ENCODE measurements at regions of chr15 and their contacts with region 1.

Region 1: GRCh38 chr15:63157118-63157843 is at the start of gene RPS27L:
- DNase-seq: peak; percentile 91 to 97 (median 96)
- ATAC-seq: peak; percentile 98
- H3K4me3 ChIP-seq: peak within 1 kb of the TSS; percentile 45
- H3K27ac ChIP-seq: peak within 1 kb of the TSS; percentile 61
- H3K4me1 ChIP-seq: no peaks in the 10 kb centered on the region
- H3K27me3 ChIP-seq: no peaks in the 10 kb centered on the region
- total RNA-seq, gene RPS27L: 142 to 188 (median 159) TPM

Region 2: DNA sequence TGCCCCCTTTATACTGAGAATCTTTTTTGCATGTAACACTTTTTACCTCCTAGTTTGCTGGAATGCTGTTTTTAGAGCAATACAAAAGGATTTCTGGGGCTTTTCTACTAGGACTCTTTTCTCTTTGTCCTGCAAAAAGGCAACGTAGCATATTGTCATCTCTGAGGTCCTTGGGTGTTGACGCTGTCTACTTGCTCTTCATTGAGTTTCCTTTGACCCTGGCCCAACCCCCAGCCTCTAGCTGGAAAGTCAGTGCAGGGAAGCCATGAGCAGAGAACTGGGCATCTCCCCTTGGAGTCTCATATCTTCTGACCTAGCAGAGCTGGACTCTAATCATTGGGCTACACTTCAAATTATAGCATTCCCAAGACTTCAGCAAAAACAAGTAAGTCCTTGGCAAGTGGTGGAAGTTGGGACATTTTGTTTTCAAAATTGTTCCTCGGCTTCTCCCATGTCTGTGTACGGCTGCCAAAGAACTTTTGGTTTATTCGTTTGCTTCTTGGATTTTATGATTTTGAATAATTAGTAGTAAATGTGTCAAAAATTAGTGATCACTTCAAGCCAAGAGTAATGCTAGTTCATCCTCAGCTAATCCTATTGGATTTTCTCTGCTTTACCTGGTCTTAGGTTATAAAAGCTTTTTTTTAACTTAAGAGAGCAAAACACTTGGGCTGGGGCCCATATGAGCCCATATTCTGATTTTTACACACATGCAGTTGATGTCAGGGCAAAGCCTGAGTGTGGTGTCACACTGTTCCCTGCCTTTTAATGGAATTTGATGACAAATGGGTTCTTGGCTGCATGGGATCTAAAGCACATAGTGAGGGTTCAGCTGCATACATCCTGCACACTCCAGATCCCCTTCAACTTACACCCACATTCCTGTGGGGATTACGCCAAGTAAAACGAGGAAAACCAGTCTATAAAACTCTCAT is 572.7 kb before region 1 on chr15:
- intact Hi-C with region 1: no loop called
- DNase-seq: peak in 1 of 3 donors; percentile 70
- ATAC-seq: peak; percentile 69 to 92
- H3K4me3 ChIP-seq: no peak overlapping the region
- H3K27ac ChIP-seq: peak overlapping the region; percentile 81
- H3K4me1 ChIP-seq: peaks cover 4% of the 10 kb centered on the region
- H3K27me3 ChIP-seq: no peaks in the 10 kb centered on the region

Region 3: DNA sequence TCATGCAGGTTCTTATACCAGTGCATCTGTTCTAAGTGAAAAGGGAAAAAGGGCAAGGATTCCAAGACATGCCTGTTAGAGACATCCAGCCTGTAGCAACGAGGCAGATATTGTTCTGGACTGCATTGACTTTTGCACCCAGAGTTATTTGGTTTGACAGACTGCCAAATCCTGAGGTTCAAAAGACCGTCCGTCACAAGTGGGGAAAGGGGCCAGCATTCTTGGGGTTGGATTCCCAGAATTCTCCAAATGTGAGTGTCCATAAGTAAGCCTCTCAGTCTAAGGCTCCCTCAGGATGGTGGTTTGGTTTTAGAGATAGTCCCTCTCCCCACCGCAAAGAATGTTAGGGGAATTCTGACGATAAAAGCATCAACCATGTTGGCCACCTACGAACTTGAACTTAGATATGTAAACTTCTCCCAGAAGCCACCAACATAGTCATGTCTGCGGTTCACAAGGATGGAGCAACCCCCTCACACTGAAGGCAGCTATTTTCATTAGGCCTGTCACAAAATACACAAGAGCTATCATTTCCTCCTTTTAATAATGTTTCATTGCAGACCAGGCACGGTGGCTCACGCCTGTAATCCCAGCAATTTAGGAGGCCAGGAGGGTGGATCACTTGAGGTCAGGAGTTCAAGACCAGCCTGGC is 49.3 kb before region 1 on chr15:
- intact Hi-C with region 1: no loop called
- DNase-seq: peak in 1 of 3 donors; percentile 30
- ATAC-seq: peak; percentile 31 to 40
- H3K4me3 ChIP-seq: no peak overlapping the region
- H3K27ac ChIP-seq: no peak overlapping the region
- H3K4me1 ChIP-seq: no peaks in the 10 kb centered on the region
- H3K27me3 ChIP-seq: no peaks in the 10 kb centered on the region

Region 4: GRCh38 chr15:63246691-63247464 is 89.6 kb after region 1 on chr15:
- intact Hi-C with region 1: loop called in 1 of 4 experiments (anchors 10 kb)
- DNase-seq: no peak
- ATAC-seq: peak; percentile 61 to 67
- H3K4me3 ChIP-seq: no peak overlapping the region
- H3K27ac ChIP-seq: peak overlapping the region; percentile 65
- H3K4me1 ChIP-seq: peaks cover 4% of the 10 kb centered on the region
- H3K27me3 ChIP-seq: no peaks in the 10 kb centered on the region

Region 5: GRCh38 chr15:63277038-63277892 is 120.0 kb after region 1 on chr15 and contains the start of gene APH1B:
- intact Hi-C with region 1: loop called in 1 of 4 experiments (anchors 10 kb)
- DNase-seq: peak; percentile 88 to 95 (median 95)
- ATAC-seq: peak; percentile 97
- H3K4me3 ChIP-seq: peak within 1 kb of the TSS; percentile 88
- H3K27ac ChIP-seq: peak within 1 kb of the TSS; percentile 93
- H3K4me1 ChIP-seq: peaks cover 4% of the 10 kb centered on the region
- H3K27me3 ChIP-seq: no peaks in the 10 kb centered on the region
- total RNA-seq, gene APH1B: 10.4 to 13.4 (median 10.9) TPM

Region 6: DNA sequence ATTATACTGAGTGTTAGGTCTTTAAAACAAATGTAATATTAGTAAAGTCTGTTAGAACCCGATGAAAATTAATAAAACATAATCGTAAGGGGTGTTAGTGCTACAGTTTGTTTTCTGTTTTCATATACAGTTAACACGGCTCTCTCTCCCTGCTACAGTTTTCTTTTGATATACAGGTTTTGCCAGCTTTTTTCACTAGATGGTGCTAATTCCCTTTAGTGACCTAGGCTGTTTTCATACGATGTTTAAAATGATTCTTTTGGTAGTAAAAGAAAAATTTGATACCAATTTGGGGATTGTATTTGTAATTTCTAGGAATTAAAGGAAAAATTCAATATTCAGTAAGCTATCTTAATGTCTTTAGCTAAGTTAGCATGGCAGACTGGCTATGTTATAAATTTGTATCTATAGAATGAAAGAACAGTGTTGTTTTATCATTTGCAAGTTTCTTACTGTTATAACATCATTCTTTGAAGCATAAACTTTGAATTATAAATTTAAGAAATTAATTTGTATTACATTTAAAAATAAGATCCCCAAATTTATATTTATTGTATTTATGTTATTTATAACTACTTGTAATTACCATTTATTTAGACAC is 131.6 kb after region 1 on chr15:
- intact Hi-C with region 1: loop called in 1 of 4 experiments (anchors 5 kb)
- DNase-seq: no peak
- ATAC-seq: peak in 1 of 2 donors; percentile 57
- H3K4me3 ChIP-seq: no peak overlapping the region
- H3K27ac ChIP-seq: no peak overlapping the region
- H3K4me1 ChIP-seq: peaks cover 1% of the 10 kb centered on the region
- H3K27me3 ChIP-seq: no peaks in the 10 kb centered on the region